Gastrocnemius medialis (tissue), 4 donors: ENCODE measurements at regions of chr1 and their contacts with region 1.

Region 1: GRCh38 chr1:32072622-32073298 is at the start of gene TMEM39B:
- DNase-seq: peak; percentile 86 to 93
- ATAC-seq: peak; percentile 93 to 94
- H3K4me3 ChIP-seq: peak within 1 kb of the TSS; percentile 84 to 96 (median 90)
- H3K27ac ChIP-seq: peak within 1 kb of the TSS; percentile 95 to 97 (median 97)
- H3K4me1 ChIP-seq: peaks cover 12 to 18% of the 10 kb centered on the region in 2 donors
- H3K27me3 ChIP-seq: no peaks in the 10 kb centered on the region
- CTCF ChIP-seq: peak in 4 of 5 experiments; percentile 29 to 42 (median 33)
- POLR2A ChIP-seq: peak in 1 of 2 donors; percentile 51
- total RNA-seq, gene TMEM39B: 2.5 to 11.1 (median 6.7) TPM

Region 2: DNA sequence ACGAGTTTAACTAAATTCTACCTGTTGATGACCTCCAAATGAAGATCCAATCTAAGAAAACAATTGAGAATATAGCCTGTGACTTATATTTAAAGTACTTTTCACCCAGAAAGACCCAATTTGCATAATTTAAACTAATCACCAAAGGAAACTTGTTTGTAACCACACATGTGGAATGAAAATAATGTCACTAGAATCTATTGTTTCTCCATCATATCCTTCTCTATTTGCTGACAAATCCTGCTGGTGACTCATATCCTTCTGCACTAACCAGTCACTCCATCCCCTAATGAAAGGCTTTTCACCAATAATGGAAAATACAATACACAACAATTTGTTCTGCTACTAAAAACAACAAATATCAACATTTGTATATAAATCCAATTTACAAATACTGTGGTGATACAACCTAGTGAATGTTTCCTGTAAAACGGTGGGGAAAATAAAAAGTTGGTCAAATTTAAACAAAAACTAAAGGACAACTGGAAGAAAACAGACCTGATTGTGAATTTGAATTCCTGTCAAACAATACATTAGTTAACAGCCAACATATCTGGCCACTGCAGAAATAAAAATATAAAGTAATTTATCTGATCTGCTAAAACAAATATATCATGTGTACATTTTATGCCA is 141.1 kb before region 1 on chr1:
- in situ Hi-C with region 1: no loop called
- intact Hi-C with region 1: loop called (anchors 5 kb)
- DNase-seq: no peak
- ATAC-seq: no peak
- H3K4me3 ChIP-seq: peak overlapping the region in 1 of 4 donors; percentile 6
- H3K27ac ChIP-seq: peak overlapping the region; percentile 97 to 99 (median 98)
- H3K4me1 ChIP-seq: peaks cover 92 to 97% of the 10 kb centered on the region in 2 donors
- H3K27me3 ChIP-seq: no peaks in the 10 kb centered on the region
- CTCF ChIP-seq: no peak
- POLR2A ChIP-seq: no peak

Region 3: DNA sequence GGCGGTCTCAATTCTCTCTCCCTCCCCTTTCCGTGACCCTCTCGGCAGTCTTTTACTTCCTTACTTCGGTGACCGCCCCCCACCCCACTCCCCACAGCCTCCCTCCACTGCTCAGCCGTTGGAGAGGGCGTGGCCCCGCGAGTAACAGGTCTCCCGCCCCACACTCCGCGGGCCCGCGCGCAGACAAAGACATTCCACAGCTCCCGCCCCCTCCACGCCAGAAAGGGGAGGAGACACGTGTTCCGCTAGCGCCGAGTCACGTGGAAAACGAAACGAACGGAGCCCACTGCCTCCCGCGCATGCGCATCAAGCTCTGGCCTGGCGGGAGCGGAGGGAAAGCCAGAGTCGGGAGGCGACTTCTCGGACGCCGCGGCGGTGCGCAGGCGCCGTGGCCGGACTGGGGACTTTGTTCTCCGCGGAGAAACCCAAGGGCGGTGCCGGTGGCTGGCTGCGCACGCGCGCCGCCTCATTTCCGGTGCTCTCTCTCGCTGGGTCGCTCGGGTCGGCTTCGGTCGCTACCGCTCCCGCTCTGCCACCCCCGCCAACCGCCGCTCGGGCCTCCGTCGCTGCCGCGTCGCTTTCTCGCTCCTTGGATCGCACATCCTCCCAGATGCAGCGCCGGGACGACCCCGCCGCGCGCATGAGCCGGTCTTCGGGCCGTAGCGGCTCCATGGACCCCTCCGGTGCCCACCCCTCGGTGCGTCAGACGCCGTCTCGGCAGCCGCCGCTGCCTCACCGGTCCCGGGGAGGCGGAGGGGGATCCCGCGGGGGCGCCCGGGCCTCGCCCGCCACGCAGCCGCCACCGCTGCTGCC is 59.2 kb before region 1 on chr1 and contains the start of gene KHDRBS1:
- in situ Hi-C with region 1: no loop called
- intact Hi-C with region 1: loop called (anchors 2 kb)
- DNase-seq: peak; percentile 97 to 99
- ATAC-seq: peak; percentile 93 to 96
- H3K4me3 ChIP-seq: peak within 1 kb of the TSS; percentile 84 to 96 (median 90)
- H3K27ac ChIP-seq: peak within 1 kb of the TSS; percentile 96 to 99 (median 98)
- H3K4me1 ChIP-seq: peaks cover 19 to 31% of the 10 kb centered on the region in 2 donors
- H3K27me3 ChIP-seq: no peaks in the 10 kb centered on the region
- CTCF ChIP-seq: peak in 1 of 5 experiments; percentile 17
- POLR2A ChIP-seq: peak; percentile 91 to 92
- total RNA-seq, gene KHDRBS1: 19.9 to 50.3 (median 34.6) TPM

Region 4: GRCh38 chr1:32107742-32108661 is 35.2 kb after region 1 on chr1 and contains the start of gene KPNA6:
- in situ Hi-C with region 1: no loop called
- intact Hi-C with region 1: loop called (anchors 1 kb)
- DNase-seq: peak; percentile 83 to 91
- ATAC-seq: peak; percentile 89 to 91
- H3K4me3 ChIP-seq: peak within 1 kb of the TSS; percentile 86 to 98 (median 98)
- H3K27ac ChIP-seq: peak within 1 kb of the TSS; percentile 94 to 99 (median 96)
- H3K4me1 ChIP-seq: peaks cover 40% of the 10 kb centered on the region in 2 donors
- H3K27me3 ChIP-seq: no peaks in the 10 kb centered on the region
- CTCF ChIP-seq: peak in 1 of 5 experiments; percentile 24
- POLR2A ChIP-seq: peak; percentile 60 to 74
- total RNA-seq, gene KPNA6: 67.3 to 80.7 (median 74.4) TPM

Region 5: DNA sequence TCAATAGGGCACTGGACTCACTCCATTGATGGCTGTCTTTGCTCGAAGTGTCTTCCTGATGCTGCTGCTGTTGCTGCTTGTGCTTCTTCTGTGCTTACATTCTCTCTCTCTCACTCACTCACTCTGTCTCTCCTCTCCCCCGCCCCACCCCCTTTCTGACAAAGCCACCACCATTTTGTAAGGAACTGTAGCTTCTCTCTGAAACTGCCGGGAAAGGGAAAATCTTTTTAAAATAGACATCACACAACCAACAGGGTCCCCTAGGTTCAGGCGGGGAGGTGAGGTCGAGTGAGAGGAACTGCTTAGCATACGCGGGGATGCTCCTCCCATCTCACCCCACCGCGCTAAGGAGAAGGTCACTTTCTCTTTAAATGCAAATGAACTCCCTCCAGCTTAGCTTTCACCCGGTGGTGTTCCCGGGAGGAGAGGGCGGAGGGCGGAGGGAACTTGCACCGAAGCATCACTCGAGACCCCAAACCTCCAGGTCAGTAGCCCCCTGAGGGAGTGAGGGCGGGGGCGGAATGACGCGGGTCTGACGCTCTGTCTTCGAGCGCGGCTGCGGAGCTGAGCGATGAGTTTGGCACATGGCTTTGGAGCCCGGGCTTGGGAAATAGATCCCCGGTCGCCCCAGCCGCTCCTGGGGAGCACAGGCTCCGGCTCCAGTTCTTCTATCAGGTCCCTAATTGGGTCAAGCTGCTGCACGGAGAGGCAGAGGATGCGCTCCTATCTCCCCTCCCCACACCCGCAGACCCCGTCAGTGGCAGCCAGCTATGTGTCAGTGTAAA is 127.7 kb after region 1 on chr1 and contains the start of gene CCDC28B:
- in situ Hi-C with region 1: no loop called
- intact Hi-C with region 1: loop called (anchors 2 kb)
- DNase-seq: peak; percentile 61 to 70
- ATAC-seq: peak; percentile 58 to 62
- H3K4me3 ChIP-seq: peak within 1 kb of the TSS; percentile 65 to 84 (median 72)
- H3K27ac ChIP-seq: peak within 1 kb of the TSS; percentile 86 to 99 (median 94)
- H3K4me1 ChIP-seq: peaks cover 49 to 70% of the 10 kb centered on the region in 2 donors
- H3K27me3 ChIP-seq: no peaks in the 10 kb centered on the region
- CTCF ChIP-seq: no peak
- POLR2A ChIP-seq: peak; percentile 70 to 93
- total RNA-seq, gene CCDC28B: 16.4 to 79.0 (median 56.8) TPM

Region 6: GRCh38 chr1:32240140-32240951 is 167.6 kb after region 1 on chr1:
- in situ Hi-C with region 1: no loop called
- intact Hi-C with region 1: loop called (anchors 2 kb)
- DNase-seq: peak in 1 of 2 donors; percentile 39
- ATAC-seq: peak; percentile 36 to 45
- H3K4me3 ChIP-seq: peak overlapping the region; percentile 62 to 74 (median 64)
- H3K27ac ChIP-seq: peak overlapping the region; percentile 59 to 74 (median 71)
- H3K4me1 ChIP-seq: peaks cover 10 to 13% of the 10 kb centered on the region in 2 donors
- H3K27me3 ChIP-seq: no peaks in the 10 kb centered on the region
- CTCF ChIP-seq: peak in 2 of 5 experiments; percentile 24 to 35
- POLR2A ChIP-seq: peak; percentile 48 to 54